Activated T-helper 2 cell treated with anti-CD3 and anti-CD28 coated beads, Interferon-gamma antibody, Interleukin-2, Interleukin-4, amounts not matched to agents 10 μg/mL and 5 μg/mL and 100 μg/mL, durations not matched to agents 14 hours and 24 hours and 36 hours (primary cell): ENCODE measurements at regions of chr6 and their contacts with region 1.

Region 1: DNA sequence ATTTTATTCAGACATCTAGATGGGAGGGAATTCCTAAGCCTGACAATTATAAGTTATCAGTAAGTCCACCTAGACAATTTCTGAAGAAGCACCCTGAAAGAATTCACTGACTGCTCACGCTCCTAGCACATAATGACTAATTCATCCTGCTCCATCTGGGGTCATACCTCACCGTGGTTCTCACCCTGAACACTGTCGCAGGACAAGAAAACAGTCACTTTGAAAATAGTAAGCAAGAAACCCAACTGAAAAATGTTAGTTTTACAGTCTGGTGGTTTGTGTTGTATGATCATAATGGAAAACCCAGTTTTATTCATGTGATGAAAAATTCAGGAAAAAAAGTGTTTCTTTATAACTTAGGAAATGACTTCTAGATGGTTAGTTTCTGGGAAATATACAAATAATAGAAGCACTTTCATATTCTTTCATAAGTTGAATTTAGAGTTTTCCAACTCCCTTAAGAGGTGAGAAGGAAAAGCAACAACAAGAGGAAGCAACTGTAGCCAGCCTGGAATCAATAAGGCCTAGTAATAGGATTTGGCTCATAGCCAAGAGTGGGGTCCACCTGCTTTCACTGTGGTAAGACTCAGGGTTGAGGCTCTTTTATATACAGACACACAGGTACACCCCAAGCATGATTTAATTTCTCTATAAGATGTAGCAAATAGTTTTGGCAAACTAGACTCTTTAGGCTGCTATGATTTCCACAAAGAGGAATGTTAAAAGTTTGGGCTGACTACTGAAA is 94.1 kb downstream of the HIVEP2 start:
- DNase-seq: no peak
- H3K4me3 Mint-ChIP-seq: peak overlapping the region; percentile 21
- H3K27ac Mint-ChIP-seq: peak overlapping the region; percentile 83
- H3K4me1 Mint-ChIP-seq: peaks cover 90% of the 10 kb centered on the region
- H3K27me3 Mint-ChIP-seq: no peaks in the 10 kb centered on the region

Region 2: GRCh38 chr6:142773859-142774648 is 76.8 kb before region 1 on chr6:
- intact Hi-C with region 1: loop called (anchors 5 kb)
- DNase-seq: no peak
- H3K4me3 Mint-ChIP-seq: no peak overlapping the region
- H3K27ac Mint-ChIP-seq: no peak overlapping the region
- H3K4me1 Mint-ChIP-seq: peaks cover 23% of the 10 kb centered on the region
- H3K27me3 Mint-ChIP-seq: no peaks in the 10 kb centered on the region

Region 3: DNA sequence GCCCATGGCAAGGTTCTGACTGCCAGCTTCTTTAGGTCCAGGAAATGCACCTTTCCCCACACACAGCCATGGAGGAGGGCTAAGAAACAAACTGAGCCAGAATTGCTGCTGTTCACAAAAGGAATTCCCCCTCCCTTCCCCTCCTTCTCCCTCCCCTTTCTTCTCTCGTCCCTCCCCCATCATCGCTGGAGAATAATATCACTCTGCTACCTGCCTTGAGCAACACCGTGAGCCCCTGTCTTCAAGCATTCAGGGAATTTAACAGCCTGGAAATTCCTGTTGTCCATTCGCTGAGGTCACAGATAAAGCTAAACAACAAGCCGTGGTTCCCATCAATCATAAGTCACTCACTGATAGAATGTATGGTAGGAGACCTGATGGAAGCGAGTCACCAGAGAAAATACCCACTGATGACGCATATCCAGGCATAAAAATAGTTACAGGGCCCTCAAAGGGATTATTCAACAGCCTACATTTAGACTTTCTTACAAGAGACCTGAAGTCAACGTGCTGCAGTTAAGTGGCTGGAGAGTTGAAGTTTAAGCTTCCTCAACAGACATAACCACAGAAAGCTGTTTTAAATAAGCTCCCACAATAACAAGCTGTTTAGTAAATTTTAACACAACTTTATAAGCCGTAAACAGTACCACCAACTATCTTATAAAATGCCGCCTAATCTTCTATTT is 34.5 kb after region 1 on chr6:
- intact Hi-C with region 1: loop called (anchors 2 kb)
- DNase-seq: peak; percentile 26
- H3K4me3 Mint-ChIP-seq: peak overlapping the region; percentile 92
- H3K27ac Mint-ChIP-seq: peak overlapping the region; percentile 99
- H3K4me1 Mint-ChIP-seq: peaks cover 65% of the 10 kb centered on the region
- H3K27me3 Mint-ChIP-seq: no peaks in the 10 kb centered on the region

Region 4: GRCh38 chr6:142902636-142903053 is 51.8 kb after region 1 on chr6:
- intact Hi-C with region 1: loop called (anchors 2 kb)
- DNase-seq: peak; percentile 64
- H3K4me3 Mint-ChIP-seq: peak overlapping the region; percentile 53
- H3K27ac Mint-ChIP-seq: peak overlapping the region; percentile 84
- H3K4me1 Mint-ChIP-seq: peaks cover 60% of the 10 kb centered on the region
- H3K27me3 Mint-ChIP-seq: no peaks in the 10 kb centered on the region

Region 5: GRCh38 chr6:143026696-143027449 is 176.0 kb after region 1 on chr6:
- intact Hi-C with region 1: loop called (anchors 1 kb)
- DNase-seq: peak; percentile 21
- H3K4me3 Mint-ChIP-seq: no peak overlapping the region
- H3K27ac Mint-ChIP-seq: no peak overlapping the region
- H3K4me1 Mint-ChIP-seq: peaks cover 3% of the 10 kb centered on the region
- H3K27me3 Mint-ChIP-seq: no peaks in the 10 kb centered on the region

Region 6: DNA sequence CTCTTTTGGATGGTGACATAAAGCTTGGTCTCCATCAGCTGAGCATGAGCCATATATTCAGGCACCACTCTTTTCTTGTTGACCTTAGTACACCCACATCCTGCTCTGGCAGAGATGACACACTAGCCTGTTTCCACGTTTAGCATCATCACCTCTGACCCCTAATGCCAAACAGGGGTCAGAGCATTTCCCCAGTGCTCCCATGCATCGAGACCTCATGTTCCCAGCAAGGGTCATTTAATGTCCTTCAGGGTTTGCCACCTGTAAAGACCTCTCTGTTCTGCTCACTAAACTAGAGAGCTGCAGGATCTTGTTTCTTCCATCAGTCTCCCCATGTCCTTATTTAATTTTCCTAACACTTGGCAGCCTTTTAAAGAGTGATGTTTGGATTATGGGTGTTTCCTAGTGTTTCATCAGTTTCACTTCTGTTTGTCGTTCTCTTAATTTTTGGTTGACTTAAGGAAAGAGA is 307.3 kb after region 1 on chr6:
- intact Hi-C with region 1: no loop called
- DNase-seq: no peak
- H3K4me3 Mint-ChIP-seq: no peak overlapping the region
- H3K27ac Mint-ChIP-seq: no peak overlapping the region
- H3K4me1 Mint-ChIP-seq: peaks cover 1% of the 10 kb centered on the region
- H3K27me3 Mint-ChIP-seq: no peaks in the 10 kb centered on the region

Region 7: GRCh38 chr6:143450453-143451371 is 599.9 kb after region 1 on chr6 and contains the starts of genes ADAT2 and PEX3:
- intact Hi-C with region 1: loop called (anchors 10 kb)
- DNase-seq: peak; percentile 93
- H3K4me3 Mint-ChIP-seq: peak within 1 kb of the TSS; percentile 94
- H3K27ac Mint-ChIP-seq: peak within 1 kb of the TSS; percentile 97
- H3K4me1 Mint-ChIP-seq: peaks cover 36% of the 10 kb centered on the region
- H3K27me3 Mint-ChIP-seq: no peaks in the 10 kb centered on the region
- total RNA-seq, gene ADAT2: 35.7 and 37.6 TPM in 2 replicates
- total RNA-seq, gene PEX3: 21.4 and 23.6 TPM in 2 replicates

Region 8: DNA sequence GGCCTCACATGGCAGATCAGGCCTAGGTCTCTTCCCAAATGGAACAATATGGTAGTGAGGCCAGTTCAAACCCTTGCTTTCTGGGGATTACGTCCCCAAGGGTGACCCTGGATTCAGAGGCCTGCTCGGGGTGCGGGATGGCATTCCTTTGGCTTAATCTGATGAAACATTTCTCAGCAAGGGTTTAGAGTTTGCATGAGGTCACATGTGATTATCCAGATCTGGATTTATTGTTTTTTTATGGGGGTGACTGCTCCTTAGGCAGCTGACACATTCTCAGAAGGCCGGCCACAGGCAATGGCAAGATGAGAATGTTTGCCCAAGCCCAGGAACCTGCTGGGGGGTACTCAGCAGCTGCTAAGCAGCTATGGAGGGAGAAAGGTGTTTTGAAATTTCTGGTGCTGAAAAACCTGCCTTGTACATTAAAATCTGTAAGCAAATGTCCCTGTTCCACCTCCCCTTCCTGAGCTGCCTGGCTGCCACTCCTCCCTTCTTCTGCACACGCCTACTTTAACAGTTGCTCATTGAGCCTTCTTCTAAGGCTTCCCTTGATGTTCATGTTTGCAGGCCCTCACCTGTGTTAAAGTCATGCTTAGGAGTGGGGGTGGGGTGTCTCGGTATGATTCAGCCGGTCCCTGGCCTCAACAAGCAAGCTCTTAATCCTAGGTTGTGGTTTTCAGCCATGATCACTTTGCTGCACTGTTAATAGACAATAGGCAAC is 698.5 kb after region 1 on chr6:
- intact Hi-C with region 1: loop called (anchors 10 kb)
- DNase-seq: peak; percentile 30
- H3K4me3 Mint-ChIP-seq: no peak overlapping the region
- H3K27ac Mint-ChIP-seq: peak overlapping the region; percentile 60
- H3K4me1 Mint-ChIP-seq: peaks cover 87% of the 10 kb centered on the region
- H3K27me3 Mint-ChIP-seq: no peaks in the 10 kb centered on the region